ENCODE measurements at regions of chr14 and their contacts with region 1.

Region 1: GRCh38 chr14:49892636-49893308 is at the start of gene ARF6:
- DNase-seq: peak; percentile 98
- ATAC-seq: peak; percentile 80
- H3K4me3 Mint-ChIP-seq: peak within 1 kb of the TSS; percentile 88
- H3K27ac Mint-ChIP-seq: peak within 1 kb of the TSS; percentile 97
- H3K4me1 Mint-ChIP-seq: peaks cover 4% of the 10 kb centered on the region
- H3K27me3 Mint-ChIP-seq: no peaks in the 10 kb centered on the region
- CTCF ChIP-seq: no peak
- total RNA-seq, gene ARF6: 170 TPM

Region 2: DNA sequence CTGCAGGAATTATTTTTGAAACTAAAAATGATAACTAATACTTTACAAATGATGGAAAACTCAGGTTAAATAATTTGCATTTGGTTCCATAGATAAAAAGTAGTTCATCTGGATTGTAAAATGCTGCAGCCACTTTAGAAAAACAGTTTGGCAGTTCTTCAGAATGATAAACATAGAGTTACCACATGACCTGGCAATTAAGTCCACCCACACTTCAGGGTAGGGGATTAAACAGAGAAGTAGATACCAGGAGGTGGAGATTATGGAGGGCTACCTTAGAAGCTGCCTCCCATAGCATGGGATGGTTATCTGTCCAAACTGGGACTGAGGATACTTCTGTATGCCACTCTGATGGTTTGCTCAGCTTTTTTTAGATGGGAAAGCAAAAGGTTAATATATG is 22.3 kb after region 1 on chr14:
- CTCF ChIA-PET with region 1: no interaction called
- POLR2A ChIA-PET with region 1: no interaction called
- intact Hi-C with region 1: no loop called
- DNase-seq: no peak
- ATAC-seq: no peak
- H3K4me3 Mint-ChIP-seq: no peak overlapping the region
- H3K27ac Mint-ChIP-seq: no peak overlapping the region
- H3K4me1 Mint-ChIP-seq: peaks cover 27% of the 10 kb centered on the region
- H3K27me3 Mint-ChIP-seq: no peaks in the 10 kb centered on the region
- CTCF ChIP-seq: no peak

Region 3: DNA sequence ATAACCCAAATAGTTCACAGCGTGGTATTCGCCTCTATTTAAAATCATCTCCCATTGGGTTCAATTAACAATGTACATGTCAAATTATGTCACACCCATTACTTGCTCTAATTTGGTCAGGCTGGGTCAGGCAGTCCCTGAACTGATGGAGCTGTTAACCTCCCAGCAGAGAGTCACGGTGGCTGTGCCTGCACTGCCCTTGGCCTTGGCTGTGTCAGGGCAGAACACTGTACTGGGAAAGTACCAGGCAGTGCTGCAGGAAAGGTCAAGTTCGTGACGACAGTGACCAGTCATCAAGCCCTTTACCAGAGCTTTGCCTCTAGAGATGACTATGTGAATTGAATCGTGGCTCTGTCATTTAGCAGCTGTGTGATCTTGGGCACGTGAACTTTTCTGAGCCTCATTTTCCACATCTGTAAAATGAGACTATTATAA is 100.1 kb after region 1 on chr14:
- CTCF ChIA-PET with region 1: no interaction called
- POLR2A ChIA-PET with region 1: interaction called, 13 read pairs
- intact Hi-C with region 1: no loop called
- DNase-seq: peak; percentile 80
- ATAC-seq: peak; percentile 96
- H3K4me3 Mint-ChIP-seq: peak overlapping the region; percentile 56
- H3K27ac Mint-ChIP-seq: peak overlapping the region; percentile 81
- H3K4me1 Mint-ChIP-seq: peaks cover 26% of the 10 kb centered on the region
- H3K27me3 Mint-ChIP-seq: no peaks in the 10 kb centered on the region
- CTCF ChIP-seq: no peak

Measured in activated CD8-positive, alpha-beta T cell treated with anti-CD3 and anti-CD28 coated beads for 36 hours (primary cell).